ENCODE measurements at regions of chr1 and their contacts with region 1.

Region 1: GRCh38 chr1:59150577-59151391 is 146.1 kb upstream of the FGGY start:
- DNase-seq: peak; percentile 92
- H3K4me3 ChIP-seq: peak overlapping the region in 1 of 3 experiments; percentile 21
- H3K27ac ChIP-seq: peak overlapping the region; percentile 38
- H3K4me1 ChIP-seq: peaks cover 34% of the 10 kb centered on the region
- H3K27me3 ChIP-seq: no peaks in the 10 kb centered on the region
- CTCF ChIP-seq: no peak

Region 2: GRCh38 chr1:58903514-58904298 is 247.1 kb before region 1 on chr1:
- CTCF ChIA-PET with region 1: no interaction called
- dilution Hi-C with region 1: no loop called
- in situ Hi-C with region 1: no loop called
- intact Hi-C with region 1: loop called (anchors 10 kb)
- DNase-seq: peak; percentile 84
- H3K4me3 ChIP-seq: peak overlapping the region; percentile 14 to 52 (median 48)
- H3K27ac ChIP-seq: peak overlapping the region; percentile 72
- H3K4me1 ChIP-seq: peaks cover 32% of the 10 kb centered on the region
- H3K27me3 ChIP-seq: no peaks in the 10 kb centered on the region
- CTCF ChIP-seq: no peak

Region 3: GRCh38 chr1:59186656-59187055 is 35.9 kb after region 1 on chr1:
- CTCF ChIA-PET with region 1: no interaction called
- dilution Hi-C with region 1: no loop called
- in situ Hi-C with region 1: no loop called
- intact Hi-C with region 1: no loop called
- DNase-seq: no peak
- H3K4me3 ChIP-seq: no peak overlapping the region
- H3K27ac ChIP-seq: no peak overlapping the region
- H3K4me1 ChIP-seq: no peaks in the 10 kb centered on the region
- H3K27me3 ChIP-seq: no peaks in the 10 kb centered on the region
- CTCF ChIP-seq: peak in 1 of 2 donors; percentile 6

Region 4: GRCh38 chr1:59290193-59290947 is 139.6 kb after region 1 on chr1:
- CTCF ChIA-PET with region 1: no interaction called
- dilution Hi-C with region 1: no loop called
- in situ Hi-C with region 1: no loop called
- intact Hi-C with region 1: loop called (anchors 5 kb)
- DNase-seq: peak; percentile 68
- H3K4me3 ChIP-seq: no peak overlapping the region
- H3K27ac ChIP-seq: no peak overlapping the region
- H3K4me1 ChIP-seq: peaks cover 3% of the 10 kb centered on the region
- H3K27me3 ChIP-seq: no peaks in the 10 kb centered on the region
- CTCF ChIP-seq: peak; percentile 48 to 59

Region 5: GRCh38 chr1:59375321-59376220 is 224.8 kb after region 1 on chr1:
- CTCF ChIA-PET with region 1: no interaction called
- dilution Hi-C with region 1: no loop called
- in situ Hi-C with region 1: no loop called
- intact Hi-C with region 1: loop called (anchors 10 kb)
- DNase-seq: peak; percentile 98
- H3K4me3 ChIP-seq: no peak overlapping the region
- H3K27ac ChIP-seq: peak overlapping the region; percentile 64
- H3K4me1 ChIP-seq: peaks cover 10% of the 10 kb centered on the region
- H3K27me3 ChIP-seq: no peaks in the 10 kb centered on the region
- CTCF ChIP-seq: no peak